ENCODE measurements at regions of chr20 and their contacts with region 1.

Region 1: GRCh38 chr20:266596-267562 is 9.4 kb downstream of the DEFB132 start:
- DNase-seq: peak; percentile 91
- CTCF ChIP-seq: peak; percentile 94

Region 2: DNA sequence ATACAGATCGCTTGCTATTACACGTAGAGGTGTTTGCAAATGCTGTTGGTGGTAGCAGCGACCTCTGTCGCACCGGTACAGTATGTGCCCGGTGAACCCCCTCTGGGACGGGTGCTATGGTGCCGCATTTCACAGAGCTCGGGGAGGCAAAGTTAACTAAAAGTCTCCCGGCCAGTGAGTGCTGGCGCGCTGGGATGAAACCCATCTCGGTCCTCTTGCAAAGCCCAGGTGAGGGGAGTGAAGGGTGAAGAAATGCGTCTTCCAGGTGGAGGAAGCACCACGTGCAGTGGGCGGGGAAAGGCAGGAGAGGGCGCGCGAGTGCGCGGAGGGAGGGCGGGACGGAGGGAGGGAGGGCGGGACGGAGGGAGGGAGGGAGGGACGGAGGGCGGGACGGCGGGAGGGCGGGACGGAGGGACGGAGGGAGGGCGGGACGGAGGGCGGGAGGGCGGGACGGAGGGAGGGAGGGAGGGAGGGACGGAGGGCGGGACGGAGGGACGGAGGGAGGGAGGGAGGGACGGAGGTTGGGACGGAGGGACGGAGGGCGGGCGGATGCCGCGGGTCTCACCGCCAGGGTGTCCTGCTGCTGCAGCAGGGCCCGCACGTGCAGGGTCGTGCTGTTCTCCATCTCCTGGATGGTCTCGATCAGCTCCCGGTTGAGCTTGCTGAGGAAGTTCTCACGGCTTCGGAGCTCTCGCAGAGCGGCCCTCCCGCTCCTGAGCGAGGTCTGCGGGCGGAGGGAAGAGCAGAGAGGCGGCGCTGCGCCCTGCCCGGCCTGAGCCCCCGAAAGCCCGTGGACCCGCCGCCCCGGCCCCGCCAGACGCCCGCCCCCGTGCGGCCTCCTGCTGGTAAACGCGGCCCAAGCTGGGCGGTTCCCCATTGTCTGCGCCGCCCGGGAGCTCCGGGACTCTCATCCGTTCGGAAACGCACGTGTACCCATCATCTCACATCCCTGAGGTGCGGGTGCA is 12.0 kb after region 1 on chr20:
- CTCF ChIA-PET with region 1: interaction called, 11 read pairs
- POLR2A ChIA-PET with region 1: no interaction called
- DNase-seq: no peak
- CTCF ChIP-seq: no peak

Measured in GM10248 (cell line).